ENCODE measurements at regions of chr9 and their contacts with region 1.

Region 1: GRCh38 chr9:106467113-106467864 is 395.7 kb upstream of the ZNF462 start:
- DNase-seq: no peak
- ATAC-seq: peak; percentile 58
- H3K4me3 ChIP-seq: no peak overlapping the region
- H3K27ac ChIP-seq: peak overlapping the region; percentile 6; the same call in 1 of the 2 replicates
- H3K4me1 ChIP-seq: peaks cover 6% of the 10 kb centered on the region; the same call in 1 of the 2 replicates
- H3K27me3 ChIP-seq: no peaks in the 10 kb centered on the region
- CTCF ChIP-seq: no peak
- EP300 ChIP-seq: no peak
- POLR2A ChIP-seq: no peak
- RAD21 ChIP-seq: no peak

Region 2: GRCh38 chr9:106324591-106325280 is 142.6 kb before region 1 on chr9:
- CTCF ChIA-PET with region 1: no interaction called
- POLR2A ChIA-PET with region 1: interaction called, 3 read pairs
- RAD21 ChIA-PET with region 1: interaction called, 5 read pairs
- SMC1A ChIA-PET with region 1: interaction called, 10 read pairs
- in situ Hi-C with region 1: no loop called
- intact Hi-C with region 1: no loop called
- DNase-seq: no peak
- ATAC-seq: peak; percentile 4; the same call in 1 of the 3 replicates
- H3K4me3 ChIP-seq: no peak overlapping the region
- H3K27ac ChIP-seq: no peak overlapping the region
- H3K4me1 ChIP-seq: no peaks in the 10 kb centered on the region
- H3K27me3 ChIP-seq: no peaks in the 10 kb centered on the region
- CTCF ChIP-seq: no peak
- EP300 ChIP-seq: no peak
- POLR2A ChIP-seq: no peak
- RAD21 ChIP-seq: no peak

Region 3: DNA sequence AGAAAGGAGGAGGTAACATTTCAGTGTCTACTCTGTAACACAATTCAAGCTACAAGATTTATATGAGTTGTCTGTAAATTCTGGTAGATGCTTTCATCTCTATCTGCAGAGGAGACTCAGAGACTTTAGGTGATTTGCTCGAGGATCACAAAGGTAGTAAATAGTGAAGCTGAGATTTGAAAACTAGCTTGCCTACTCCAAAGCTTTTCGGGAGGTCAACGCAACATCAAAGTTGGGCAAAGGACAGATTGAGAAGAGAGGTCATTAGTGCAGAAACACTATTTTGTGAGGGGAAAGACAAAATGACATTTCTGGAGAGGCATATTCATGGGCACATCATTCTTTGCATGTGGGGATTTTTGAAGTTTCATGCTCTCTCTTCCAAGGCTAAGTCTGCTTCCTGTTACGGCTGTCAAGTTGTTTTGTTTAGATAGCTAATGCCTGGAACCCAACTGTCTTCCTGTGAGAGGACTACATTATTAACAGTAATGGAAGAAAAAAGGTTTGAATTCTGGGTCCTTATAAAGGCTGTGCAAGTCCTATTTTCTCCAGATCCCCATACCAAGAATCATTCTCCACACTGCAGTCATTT is 17.9 kb before region 1 on chr9:
- CTCF ChIA-PET with region 1: interaction called, 3 read pairs
- POLR2A ChIA-PET with region 1: interaction called, 3 read pairs
- RAD21 ChIA-PET with region 1: no interaction called
- SMC1A ChIA-PET with region 1: interaction called, 11 read pairs
- in situ Hi-C with region 1: no loop called
- intact Hi-C with region 1: no loop called
- DNase-seq: no peak
- ATAC-seq: peak; percentile 70
- H3K4me3 ChIP-seq: no peak overlapping the region
- H3K27ac ChIP-seq: no peak overlapping the region
- H3K4me1 ChIP-seq: no peaks in the 10 kb centered on the region
- H3K27me3 ChIP-seq: no peaks in the 10 kb centered on the region
- CTCF ChIP-seq: no peak
- EP300 ChIP-seq: no peak
- POLR2A ChIP-seq: no peak
- RAD21 ChIP-seq: no peak

Region 4: GRCh38 chr9:106503759-106504158 is 36.5 kb after region 1 on chr9:
- CTCF ChIA-PET with region 1: interaction called, 3 read pairs
- POLR2A ChIA-PET with region 1: interaction called, 7 read pairs
- RAD21 ChIA-PET with region 1: interaction called, 4 read pairs
- SMC1A ChIA-PET with region 1: interaction called, 22 read pairs
- in situ Hi-C with region 1: no loop called
- intact Hi-C with region 1: no loop called
- DNase-seq: peak; percentile 28
- ATAC-seq: peak; percentile 85
- H3K4me3 ChIP-seq: no peak overlapping the region
- H3K27ac ChIP-seq: no peak overlapping the region
- H3K4me1 ChIP-seq: no peaks in the 10 kb centered on the region
- H3K27me3 ChIP-seq: no peaks in the 10 kb centered on the region
- CTCF ChIP-seq: peak in 2 of 3 experiments; percentile 11 to 12; a peak in 2 of 6 replicates
- EP300 ChIP-seq: peak in 1 of 2 experiments; percentile 87; a peak in 2 of 4 replicates
- POLR2A ChIP-seq: no peak
- RAD21 ChIP-seq: no peak

Region 5: GRCh38 chr9:106621313-106622163 is 154.2 kb after region 1 on chr9:
- CTCF ChIA-PET with region 1: no interaction called
- POLR2A ChIA-PET with region 1: no interaction called
- RAD21 ChIA-PET with region 1: no interaction called
- SMC1A ChIA-PET with region 1: no interaction called
- in situ Hi-C with region 1: no loop called
- intact Hi-C with region 1: no loop called
- DNase-seq: no peak
- ATAC-seq: no peak
- H3K4me3 ChIP-seq: no peak overlapping the region
- H3K27ac ChIP-seq: no peak overlapping the region
- H3K4me1 ChIP-seq: no peaks in the 10 kb centered on the region
- H3K27me3 ChIP-seq: no peaks in the 10 kb centered on the region
- CTCF ChIP-seq: no peak
- EP300 ChIP-seq: no peak
- POLR2A ChIP-seq: no peak
- RAD21 ChIP-seq: no peak

Region 6: GRCh38 chr9:106682435-106683230 is 215.3 kb after region 1 on chr9:
- CTCF ChIA-PET with region 1: no interaction called
- POLR2A ChIA-PET with region 1: no interaction called
- RAD21 ChIA-PET with region 1: no interaction called
- SMC1A ChIA-PET with region 1: no interaction called
- in situ Hi-C with region 1: no loop called
- intact Hi-C with region 1: no loop called
- DNase-seq: no peak
- ATAC-seq: no peak
- H3K4me3 ChIP-seq: no peak overlapping the region
- H3K27ac ChIP-seq: no peak overlapping the region
- H3K4me1 ChIP-seq: no peaks in the 10 kb centered on the region
- H3K27me3 ChIP-seq: no peaks in the 10 kb centered on the region
- CTCF ChIP-seq: no peak
- EP300 ChIP-seq: no peak
- POLR2A ChIP-seq: no peak
- RAD21 ChIP-seq: no peak